GM13976 (cell line): ENCODE measurements at regions of chr12 and their contacts with region 1.

Region 1: DNA sequence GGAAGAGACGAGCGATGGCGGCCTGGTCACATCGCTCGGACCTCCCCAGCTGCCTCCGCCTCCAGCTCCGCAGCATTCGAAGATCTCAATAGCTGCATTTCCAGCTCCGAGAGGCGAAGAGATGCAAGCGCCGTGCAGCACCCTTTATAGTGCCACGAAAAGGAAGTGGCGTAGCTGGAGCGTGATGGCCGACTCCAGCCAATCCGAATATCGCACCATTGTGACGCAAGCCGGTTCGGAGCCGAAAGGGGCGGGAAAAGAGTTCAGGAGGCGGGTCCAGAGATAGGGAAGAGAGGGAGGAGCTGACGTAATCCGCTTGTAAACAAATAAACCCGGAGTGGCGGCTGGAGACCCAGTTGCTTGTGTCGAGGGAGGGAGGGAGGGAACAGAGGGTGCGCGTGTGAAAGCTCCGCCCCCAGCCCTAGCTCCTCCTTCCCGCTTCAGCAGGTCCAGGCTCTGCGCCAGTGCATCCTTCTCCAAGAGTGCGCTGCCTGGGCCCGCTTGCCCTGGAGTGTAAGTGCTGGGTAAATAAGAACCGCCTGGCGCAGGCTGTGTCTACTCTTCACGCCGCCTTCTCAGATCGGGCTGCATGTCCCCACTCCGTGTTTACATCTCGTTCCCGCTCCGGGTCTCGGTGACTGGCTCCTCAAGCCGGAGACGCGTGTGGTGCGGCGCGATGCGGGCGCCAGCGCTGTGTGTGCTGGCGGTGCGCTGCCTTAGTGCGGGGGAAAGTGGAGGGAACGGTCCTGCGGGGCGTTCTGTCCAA is at the start of gene BTG1:
- DNase-seq: peak; percentile 96
- CTCF ChIP-seq: no peak

Region 2: DNA sequence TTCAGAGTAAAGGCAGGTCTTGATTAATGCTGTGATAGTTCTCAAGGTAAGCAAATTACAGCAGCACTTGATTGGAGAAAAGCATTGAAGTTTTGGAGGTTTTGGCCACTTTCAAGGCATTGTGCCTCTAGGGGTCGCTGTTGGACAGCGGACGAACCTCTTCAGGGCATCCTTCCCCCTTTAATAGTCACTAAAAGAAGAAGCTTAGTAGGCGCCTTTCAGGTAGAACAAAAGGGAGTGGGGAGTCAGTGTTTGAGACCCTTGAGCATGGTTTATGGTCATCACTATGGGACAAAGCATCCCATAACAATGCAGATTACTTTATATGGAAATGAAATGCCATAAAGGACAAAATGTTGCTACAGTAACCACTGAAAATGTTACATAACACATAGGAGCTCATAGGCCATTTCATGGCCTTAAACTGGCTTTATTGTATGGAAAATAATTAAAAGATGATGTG is 763.8 kb before region 1 on chr12:
- in situ Hi-C with region 1: loop called (anchors 25 kb)
- DNase-seq: peak; percentile 16
- CTCF ChIP-seq: peak; percentile 65

Region 3: DNA sequence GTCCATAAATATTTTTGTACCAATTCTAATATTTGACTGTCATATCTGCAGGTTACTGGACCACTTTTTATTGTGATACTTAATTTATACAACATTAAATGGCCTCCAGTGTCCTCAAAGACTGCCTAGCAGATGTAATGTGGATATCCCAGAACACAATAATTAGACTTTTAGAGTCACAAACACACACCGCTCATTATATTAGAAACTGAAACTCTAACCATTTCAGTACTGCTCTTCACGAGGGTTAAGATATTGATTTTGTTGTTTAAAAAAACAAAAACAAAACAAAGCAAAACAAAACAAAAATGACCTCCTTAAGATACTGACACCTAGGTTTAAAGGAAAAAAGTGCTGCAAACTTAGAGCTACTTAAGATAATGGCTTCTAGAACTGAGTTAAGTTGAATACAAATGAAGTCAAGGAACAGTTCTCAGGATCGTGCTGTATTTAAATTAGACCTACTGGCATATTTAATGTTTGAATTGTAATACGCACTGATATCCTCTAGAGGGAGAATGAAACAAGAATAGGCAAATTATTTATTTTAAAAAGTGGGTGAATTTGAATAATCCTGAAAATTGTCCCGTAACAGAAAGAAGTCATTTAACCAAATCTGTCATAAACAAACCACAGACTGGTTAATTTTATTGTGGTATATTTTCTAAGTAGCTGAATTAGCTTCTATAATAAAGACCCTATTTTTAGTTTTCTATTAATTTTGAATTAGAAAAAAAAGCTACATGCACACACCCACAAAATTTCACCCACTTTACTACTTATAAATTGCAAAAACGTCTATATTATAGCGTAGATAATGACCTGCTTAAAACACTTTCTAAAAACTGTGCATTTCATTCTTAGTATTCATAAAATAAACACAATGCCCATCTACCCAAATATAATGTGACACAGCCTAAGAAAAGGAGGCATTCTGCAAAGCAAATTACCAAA is 568.1 kb before region 1 on chr12:
- in situ Hi-C with region 1: loop called (anchors 25 kb)
- DNase-seq: peak; percentile 37
- CTCF ChIP-seq: peak; percentile 24

Region 4: DNA sequence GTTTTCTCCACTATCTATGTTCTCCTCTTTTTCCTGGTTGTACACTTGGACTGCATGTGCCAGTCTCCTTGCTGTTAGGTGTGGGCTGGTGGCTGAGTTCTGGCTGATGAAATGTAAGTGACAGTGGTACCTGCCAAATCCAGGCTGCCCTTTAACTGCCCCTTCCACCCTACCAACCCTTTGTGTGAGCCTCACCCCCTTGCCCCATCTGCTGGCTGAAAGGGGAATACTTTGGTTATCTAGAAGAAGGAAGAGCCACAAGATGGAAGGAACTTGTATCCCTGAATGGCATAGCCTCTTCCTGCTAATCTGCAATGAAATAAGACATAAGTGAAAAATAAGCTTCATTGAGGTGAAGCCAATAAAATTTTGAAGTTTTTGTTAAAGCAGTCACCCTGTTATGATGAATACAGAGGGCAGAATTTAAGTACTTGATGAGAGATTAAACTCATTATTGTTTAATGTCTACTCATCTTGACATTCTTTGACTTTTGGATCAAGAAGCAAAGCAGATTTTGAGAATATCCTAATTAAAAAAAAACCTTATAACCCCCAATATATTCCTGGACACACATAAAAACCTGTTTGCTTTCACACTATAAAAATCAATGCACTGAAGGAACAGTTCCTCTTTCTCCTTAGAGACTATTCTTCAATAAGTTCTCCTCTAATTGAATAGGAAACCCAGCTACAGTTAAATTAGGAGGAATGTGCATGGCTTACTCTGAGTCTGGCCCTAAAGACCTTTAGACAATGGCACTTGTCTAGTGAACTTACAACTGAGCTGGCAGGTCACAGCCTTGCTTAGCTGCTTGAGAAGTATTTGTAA is 262.4 kb after region 1 on chr12:
- in situ Hi-C with region 1: loop called (anchors 10 kb)
- DNase-seq: no peak
- CTCF ChIP-seq: peak; percentile 55

Region 5: DNA sequence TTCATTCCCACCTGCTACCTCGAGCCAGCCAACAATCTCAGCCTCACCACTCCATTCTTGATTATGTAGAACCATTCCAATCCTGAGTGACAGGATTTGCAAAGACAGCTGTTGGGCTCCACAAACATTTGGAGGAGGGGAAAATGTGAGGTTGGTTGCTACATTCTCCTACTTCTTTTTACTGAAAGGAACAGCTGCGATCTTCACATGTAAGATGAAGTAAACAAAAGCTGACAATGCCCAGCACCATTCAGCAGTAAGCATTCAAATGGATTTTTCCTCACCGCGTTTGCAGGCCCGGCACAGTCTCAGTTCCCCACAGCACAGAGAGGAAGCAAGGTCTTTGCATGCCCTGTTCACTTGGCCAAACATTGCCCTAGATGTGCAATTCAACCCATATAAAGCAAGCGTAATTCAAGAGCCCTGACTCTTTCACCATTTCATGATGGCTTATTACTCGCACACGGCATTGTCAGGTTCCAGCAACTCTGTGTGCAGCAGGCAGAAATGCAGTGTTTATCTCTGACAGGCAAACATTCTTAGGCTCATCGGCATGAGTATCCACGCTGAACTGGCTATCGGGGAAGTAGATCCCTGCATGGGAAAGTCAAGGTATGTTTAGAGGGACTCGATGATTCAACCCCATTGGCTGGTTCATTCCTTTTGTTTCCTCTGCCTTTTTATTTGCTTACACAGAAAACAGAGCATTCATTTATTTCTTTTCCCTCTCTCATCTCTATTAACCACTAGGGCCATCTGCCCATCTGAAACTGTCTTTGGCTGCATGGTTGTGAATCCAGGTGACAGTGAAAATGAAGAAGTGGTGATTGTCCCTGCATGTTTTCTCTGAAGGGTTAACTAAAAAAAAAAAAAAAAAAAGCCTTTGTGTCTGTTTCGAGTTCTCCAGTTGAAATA is 320.7 kb after region 1 on chr12:
- in situ Hi-C with region 1: loop called (anchors 10 kb)
- DNase-seq: no peak
- CTCF ChIP-seq: no peak

Region 6: GRCh38 chr12:92570056-92570753 is 424.3 kb after region 1 on chr12:
- in situ Hi-C with region 1: loop called (anchors 5 kb)
- DNase-seq: peak; percentile 45
- CTCF ChIP-seq: peak; percentile 41